H1 (cell line): ENCODE measurements at regions of chr10 and their contacts with region 1.

Region 1: GRCh38 chr10:63976538-63976937 is 455.3 kb downstream of the REEP3 start:
- DNase-seq: peak in 1 of 2 experiments; percentile 75
- H3K4me3 ChIP-seq: no peak overlapping the region
- H3K27ac ChIP-seq: no peak overlapping the region
- H3K4me1 ChIP-seq: no peaks in the 10 kb centered on the region; a peak in 1 of 7 replicates
- H3K27me3 ChIP-seq: no peaks in the 10 kb centered on the region
- CTCF ChIP-seq: peak; percentile 73 to 83 (median 77)
- EP300 ChIP-seq: no peak
- POLR2A ChIP-seq: no peak
- RAD21 ChIP-seq: peak; percentile 73 to 78

Region 2: DNA sequence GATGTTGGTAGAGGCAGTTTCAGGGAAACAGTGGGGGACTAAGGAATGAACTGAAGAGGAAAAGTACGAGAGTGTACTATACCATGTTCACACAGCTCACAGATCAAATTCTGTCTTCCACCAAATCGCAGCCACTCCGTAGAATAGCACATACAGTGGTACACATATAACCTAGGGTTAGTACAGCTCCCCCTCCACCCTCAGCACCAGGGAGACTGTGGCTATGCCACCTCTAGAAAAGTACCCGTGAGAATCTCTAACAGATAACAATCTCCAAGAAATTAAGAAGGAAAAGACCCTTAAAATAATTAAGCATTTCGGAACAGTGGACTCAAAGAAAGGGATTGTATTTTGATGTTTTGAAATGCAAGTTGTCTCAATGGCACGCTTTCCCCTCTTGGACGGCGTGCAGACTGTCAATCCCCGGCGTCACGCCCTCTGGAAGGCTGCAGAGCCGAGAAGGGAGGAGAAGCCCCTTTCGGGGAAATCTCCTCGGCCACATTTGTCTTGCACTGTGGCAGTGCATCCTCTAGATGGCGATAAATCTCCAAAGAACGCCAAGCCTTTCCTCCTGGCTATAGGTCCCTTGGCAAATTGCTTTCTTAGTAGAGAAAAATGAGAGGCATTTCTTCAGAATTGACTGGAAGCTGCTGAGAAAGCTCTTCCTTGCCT is 110.3 kb before region 1 on chr10:
- CTCF ChIA-PET with region 1: interaction called, 256 read pairs
- POLR2A ChIA-PET with region 1: no interaction called
- DNase-seq: peak; percentile 64 to 88
- H3K4me3 ChIP-seq: peak overlapping the region; percentile 3 to 49 (median 25); a peak in 5 of 8 replicates
- H3K27ac ChIP-seq: no peak overlapping the region
- H3K4me1 ChIP-seq: peaks cover 0 to 3% (median 2%) of the 10 kb centered on the region in 4 experiments; a peak in 4 of 7 replicates
- H3K27me3 ChIP-seq: no peaks in the 10 kb centered on the region
- CTCF ChIP-seq: peak; percentile 64 to 93 (median 82)
- EP300 ChIP-seq: no peak
- POLR2A ChIP-seq: no peak
- RAD21 ChIP-seq: peak; percentile 82 to 88

Region 3: DNA sequence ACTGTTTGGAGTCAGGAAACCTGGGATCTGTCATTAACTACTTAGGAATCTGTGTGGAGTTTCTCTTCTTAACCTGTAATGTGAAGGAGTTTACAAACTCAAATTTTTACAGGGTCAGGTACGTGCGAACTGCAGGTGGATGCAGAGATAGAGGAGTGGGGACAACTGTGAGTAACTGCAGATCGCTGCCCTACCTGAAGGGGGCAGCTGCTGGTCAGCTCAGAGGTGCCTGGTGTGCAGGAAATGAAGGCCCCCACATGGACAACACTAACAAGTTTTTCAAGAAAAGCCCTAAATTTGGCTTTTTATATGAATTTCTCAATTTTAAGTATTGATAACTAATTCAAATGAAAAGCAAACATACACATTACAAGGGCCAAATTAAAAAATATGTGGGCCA is 75.3 kb before region 1 on chr10:
- CTCF ChIA-PET with region 1: interaction called, 37 read pairs
- POLR2A ChIA-PET with region 1: no interaction called
- DNase-seq: peak in 1 of 2 experiments; percentile 58
- H3K4me3 ChIP-seq: no peak overlapping the region
- H3K27ac ChIP-seq: no peak overlapping the region
- H3K4me1 ChIP-seq: no peaks in the 10 kb centered on the region
- H3K27me3 ChIP-seq: no peaks in the 10 kb centered on the region
- CTCF ChIP-seq: peak; percentile 75 to 89 (median 82)
- EP300 ChIP-seq: no peak
- POLR2A ChIP-seq: no peak
- RAD21 ChIP-seq: peak; percentile 46 to 64; a peak in 3 of 4 replicates

Region 4: GRCh38 chr10:63935705-63936104 is 40.8 kb before region 1 on chr10:
- CTCF ChIA-PET with region 1: interaction called, 37 read pairs
- POLR2A ChIA-PET with region 1: no interaction called
- DNase-seq: no peak
- H3K4me3 ChIP-seq: no peak overlapping the region
- H3K27ac ChIP-seq: no peak overlapping the region
- H3K4me1 ChIP-seq: peaks cover 0 to 2% (median 0%) of the 10 kb centered on the region in 4 experiments; a peak in 1 of 7 replicates
- H3K27me3 ChIP-seq: no peaks in the 10 kb centered on the region
- CTCF ChIP-seq: no peak
- EP300 ChIP-seq: no peak
- POLR2A ChIP-seq: no peak
- RAD21 ChIP-seq: no peak

Region 5: GRCh38 chr10:63987212-63987611 is 10.7 kb after region 1 on chr10:
- CTCF ChIA-PET with region 1: interaction called, 16 read pairs
- POLR2A ChIA-PET with region 1: no interaction called
- DNase-seq: no peak
- H3K4me3 ChIP-seq: no peak overlapping the region
- H3K27ac ChIP-seq: no peak overlapping the region
- H3K4me1 ChIP-seq: no peaks in the 10 kb centered on the region
- H3K27me3 ChIP-seq: no peaks in the 10 kb centered on the region
- CTCF ChIP-seq: no peak
- EP300 ChIP-seq: no peak
- POLR2A ChIP-seq: no peak
- RAD21 ChIP-seq: no peak

Region 6: DNA sequence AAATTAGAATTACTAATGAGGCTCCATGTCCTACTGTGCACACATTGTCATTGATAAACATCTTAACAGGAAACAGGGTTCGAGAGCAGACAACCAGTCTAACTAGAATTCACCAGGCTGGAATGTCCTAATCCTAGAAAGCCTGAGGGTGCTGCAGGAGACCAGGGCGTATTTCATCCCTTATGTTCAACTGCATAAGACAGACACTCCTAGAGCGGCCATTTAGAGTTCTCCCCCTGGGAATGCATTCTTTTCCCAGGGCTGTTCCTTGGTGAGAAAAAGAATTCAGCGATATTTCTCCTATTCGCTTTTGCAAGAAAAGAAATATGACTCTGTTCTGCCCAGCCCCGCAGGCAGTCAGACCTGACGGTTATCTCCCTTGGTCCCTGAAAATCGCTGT is 30.6 kb after region 1 on chr10:
- CTCF ChIA-PET with region 1: interaction called, 16 read pairs
- POLR2A ChIA-PET with region 1: no interaction called
- DNase-seq: no peak
- H3K4me3 ChIP-seq: no peak overlapping the region
- H3K27ac ChIP-seq: no peak overlapping the region
- H3K4me1 ChIP-seq: peaks cover 0 to 3% (median under 1%) of the 10 kb centered on the region in 4 experiments; a peak in 3 of 7 replicates
- H3K27me3 ChIP-seq: no peaks in the 10 kb centered on the region
- CTCF ChIP-seq: no peak
- EP300 ChIP-seq: peak in 1 of 2 experiments; percentile 88; a peak in 1 of 3 replicates
- POLR2A ChIP-seq: no peak
- RAD21 ChIP-seq: no peak

Region 7: GRCh38 chr10:64041185-64041988 is 64.8 kb after region 1 on chr10:
- CTCF ChIA-PET with region 1: interaction called, 11 read pairs
- POLR2A ChIA-PET with region 1: no interaction called
- DNase-seq: peak; percentile 84 to 92
- H3K4me3 ChIP-seq: no peak overlapping the region
- H3K27ac ChIP-seq: no peak overlapping the region
- H3K4me1 ChIP-seq: no peaks in the 10 kb centered on the region; a peak in 1 of 7 replicates
- H3K27me3 ChIP-seq: no peaks in the 10 kb centered on the region
- CTCF ChIP-seq: peak; percentile 98 to 100 (median 100)
- EP300 ChIP-seq: no peak; a peak in 1 of 3 replicates
- POLR2A ChIP-seq: no peak
- RAD21 ChIP-seq: peak; percentile 100